A549 (cell line): ENCODE measurements at regions of chr16 and their contacts with region 1.

Region 1: DNA sequence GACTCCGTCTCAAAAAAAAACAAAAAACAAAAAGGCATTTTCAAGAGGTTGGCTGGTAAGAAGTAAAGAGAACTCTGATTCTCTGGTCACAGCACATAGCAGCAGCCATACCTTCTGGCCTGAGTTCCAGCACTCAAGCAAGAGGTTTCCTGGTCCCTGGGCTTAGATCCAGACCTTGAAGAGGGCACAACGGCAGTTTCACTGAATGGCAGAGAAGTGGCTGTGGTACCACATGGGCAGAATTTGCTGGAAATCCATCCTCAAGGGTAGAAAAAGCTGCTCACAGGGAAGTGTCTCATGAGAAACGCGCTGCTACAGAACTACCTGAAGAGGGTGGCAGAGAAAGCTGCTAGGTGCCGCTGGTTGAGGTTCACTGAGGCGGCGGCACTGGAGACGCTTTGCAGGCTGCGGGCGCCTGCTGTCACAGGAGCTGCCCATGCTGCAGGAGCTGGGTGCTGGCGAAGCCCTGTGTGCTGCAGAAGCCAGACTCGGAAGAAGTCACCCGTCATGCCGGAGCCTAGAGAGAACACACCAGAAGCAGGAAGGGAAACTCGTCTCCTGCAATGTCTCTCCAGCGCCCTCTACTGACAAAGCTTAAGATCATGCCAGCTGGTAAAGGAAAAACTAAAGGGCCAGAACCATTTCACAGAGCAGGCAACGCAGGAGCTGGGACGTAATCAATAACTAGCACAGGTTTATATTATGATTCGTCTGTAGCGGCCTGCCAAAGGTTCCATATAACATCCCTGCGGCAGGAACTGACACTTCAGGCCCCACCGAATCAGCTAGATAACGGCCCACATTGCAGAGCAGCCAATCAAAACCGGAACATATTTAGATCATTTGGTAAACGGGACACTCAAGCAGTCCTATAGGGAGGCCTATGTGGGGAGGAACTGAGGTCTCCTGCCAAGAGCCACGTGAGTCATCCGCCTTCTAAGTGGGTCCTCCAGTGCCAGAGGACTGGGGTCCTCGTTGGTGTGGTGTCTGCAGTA is 5.4 kb upstream of the ZNF213 start:
- DNase-seq: peak in 1 of 2 experiments; percentile 87
- ATAC-seq: peak; percentile 70
- H3K4me3 ChIP-seq: peak overlapping the region; percentile 34
- H3K27ac ChIP-seq: peak overlapping the region; percentile 55 to 86
- H3K4me1 ChIP-seq: peaks cover 18% of the 10 kb centered on the region; the same call in 2 of the 3 replicates
- CTCF ChIP-seq: peak; percentile 93
- EP300 ChIP-seq: no peak
- POLR2A ChIP-seq: peak; percentile 11; the same call in 1 of the 2 replicates
- RAD21 ChIP-seq: peak; percentile 59 to 69; a peak in 4 of 5 replicates

Region 2: GRCh38 chr16:3023669-3024478 is 105.6 kb before region 1 on chr16 and contains the starts of genes HCFC1R1 and THOC6:
- CTCF ChIA-PET with region 1: interaction called, 12 read pairs
- POLR2A ChIA-PET with region 1: interaction called, 3 read pairs
- DNase-seq: peak; percentile 83 to 99
- ATAC-seq: peak; percentile 17 to 63
- H3K4me3 ChIP-seq: peak within 1 kb of the TSS; percentile 93
- H3K27ac ChIP-seq: peak within 1 kb of the TSS; percentile 98 to 100
- H3K4me1 ChIP-seq: peaks cover 34% of the 10 kb centered on the region
- CTCF ChIP-seq: no peak
- EP300 ChIP-seq: 0 out of 5 replicates have a peak, but pooled peaks of 1 of the 2 experiments have one; percentile 16
- POLR2A ChIP-seq: peak; percentile 69
- RAD21 ChIP-seq: no peak
- polyA plus RNA-seq, gene HCFC1R1: 46.4 and 60.3 TPM in 2 replicates
- polyA plus RNA-seq, gene THOC6: 31.8 and 32.5 TPM in 2 replicates

Region 3: DNA sequence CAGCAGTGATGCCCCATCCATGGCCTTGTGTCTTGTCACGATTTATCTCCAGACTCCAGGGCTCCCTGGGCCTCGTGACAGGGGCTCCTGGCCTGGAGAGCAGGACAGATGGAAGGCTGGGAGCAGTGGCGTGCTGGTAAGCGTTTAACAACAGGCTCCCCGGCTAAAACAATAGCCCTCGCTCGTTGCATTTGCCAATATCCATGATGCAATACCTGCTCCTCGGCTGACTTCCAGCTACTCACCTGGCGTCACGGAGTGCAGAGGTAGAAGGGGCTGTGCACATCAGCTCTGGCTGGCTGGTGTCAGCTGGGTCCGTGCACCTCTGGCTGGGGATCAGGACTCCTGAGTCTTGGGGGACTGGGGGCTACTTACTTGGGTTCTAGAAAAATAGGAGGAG is 91.2 kb before region 1 on chr16:
- CTCF ChIA-PET with region 1: interaction called, 16 read pairs
- POLR2A ChIA-PET with region 1: no interaction called
- DNase-seq: no peak
- ATAC-seq: peak in 1 of 2 experiments; percentile 1; a peak in 1 of 6 replicates
- H3K4me3 ChIP-seq: no peak overlapping the region
- H3K27ac ChIP-seq: no peak overlapping the region
- H3K4me1 ChIP-seq: 0 out of 3 replicates have a peak, but pooled peaks cover 4% of the 10 kb centered on the region
- CTCF ChIP-seq: no peak
- EP300 ChIP-seq: no peak
- POLR2A ChIP-seq: no peak
- RAD21 ChIP-seq: no peak

Region 4: DNA sequence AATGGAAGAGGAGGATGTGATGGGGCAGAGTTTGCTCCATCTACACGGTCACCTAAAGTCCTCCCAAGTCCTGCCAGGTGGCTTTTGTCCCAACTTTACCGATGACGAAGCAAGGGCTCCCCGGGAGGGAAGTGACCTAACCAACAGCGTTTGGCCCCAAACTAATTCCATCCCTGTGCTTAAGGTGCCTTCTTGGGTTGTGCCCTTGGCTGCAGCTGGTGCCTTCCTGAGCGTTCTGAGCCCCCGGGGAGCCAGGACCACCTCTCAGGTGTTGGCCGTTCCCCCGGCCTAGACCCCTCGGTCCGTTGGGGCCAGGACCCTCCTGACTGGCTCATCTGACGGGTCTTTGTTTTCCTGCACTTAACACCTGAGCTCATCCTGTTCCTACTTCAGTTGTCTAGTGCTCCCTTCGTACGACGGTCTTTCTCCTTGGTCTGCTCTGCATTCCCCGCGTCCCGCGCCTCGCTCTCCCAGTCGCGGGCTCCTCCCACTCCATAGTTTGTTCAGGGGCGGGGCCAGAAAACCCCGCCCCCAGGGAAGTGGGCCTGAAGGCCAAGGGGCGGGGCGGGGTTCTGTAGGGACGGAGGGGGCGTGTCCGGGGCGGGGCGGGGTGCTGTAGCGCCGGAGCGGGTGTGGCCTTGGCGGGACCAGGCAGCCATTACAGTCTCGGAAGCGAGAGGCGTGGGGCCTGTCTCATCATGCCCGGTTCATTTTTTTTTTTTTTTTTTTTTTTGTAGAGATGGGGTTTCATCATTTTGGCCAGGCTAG is 29.5 kb before region 1 on chr16:
- CTCF ChIA-PET with region 1: interaction called, 12 read pairs
- POLR2A ChIA-PET with region 1: interaction called, 3 read pairs
- DNase-seq: peak; percentile 80 to 92
- ATAC-seq: peak; percentile 75 to 87
- H3K4me3 ChIP-seq: peak overlapping the region; percentile 34; the same call in 2 of the 3 replicates
- H3K27ac ChIP-seq: peak overlapping the region; percentile 69 to 78
- H3K4me1 ChIP-seq: peaks cover 15% of the 10 kb centered on the region
- CTCF ChIP-seq: no peak
- EP300 ChIP-seq: no peak
- POLR2A ChIP-seq: no peak
- RAD21 ChIP-seq: no peak

Region 5: GRCh38 chr16:3118204-3118806 is 11.1 kb before region 1 on chr16:
- CTCF ChIA-PET with region 1: interaction called, 46 read pairs
- POLR2A ChIA-PET with region 1: interaction called, 10 read pairs
- DNase-seq: no peak
- ATAC-seq: no peak
- H3K4me3 ChIP-seq: no peak overlapping the region
- H3K27ac ChIP-seq: no peak overlapping the region
- H3K4me1 ChIP-seq: peaks cover 9% of the 10 kb centered on the region
- CTCF ChIP-seq: no peak
- EP300 ChIP-seq: no peak
- POLR2A ChIP-seq: no peak
- RAD21 ChIP-seq: no peak

Region 6: DNA sequence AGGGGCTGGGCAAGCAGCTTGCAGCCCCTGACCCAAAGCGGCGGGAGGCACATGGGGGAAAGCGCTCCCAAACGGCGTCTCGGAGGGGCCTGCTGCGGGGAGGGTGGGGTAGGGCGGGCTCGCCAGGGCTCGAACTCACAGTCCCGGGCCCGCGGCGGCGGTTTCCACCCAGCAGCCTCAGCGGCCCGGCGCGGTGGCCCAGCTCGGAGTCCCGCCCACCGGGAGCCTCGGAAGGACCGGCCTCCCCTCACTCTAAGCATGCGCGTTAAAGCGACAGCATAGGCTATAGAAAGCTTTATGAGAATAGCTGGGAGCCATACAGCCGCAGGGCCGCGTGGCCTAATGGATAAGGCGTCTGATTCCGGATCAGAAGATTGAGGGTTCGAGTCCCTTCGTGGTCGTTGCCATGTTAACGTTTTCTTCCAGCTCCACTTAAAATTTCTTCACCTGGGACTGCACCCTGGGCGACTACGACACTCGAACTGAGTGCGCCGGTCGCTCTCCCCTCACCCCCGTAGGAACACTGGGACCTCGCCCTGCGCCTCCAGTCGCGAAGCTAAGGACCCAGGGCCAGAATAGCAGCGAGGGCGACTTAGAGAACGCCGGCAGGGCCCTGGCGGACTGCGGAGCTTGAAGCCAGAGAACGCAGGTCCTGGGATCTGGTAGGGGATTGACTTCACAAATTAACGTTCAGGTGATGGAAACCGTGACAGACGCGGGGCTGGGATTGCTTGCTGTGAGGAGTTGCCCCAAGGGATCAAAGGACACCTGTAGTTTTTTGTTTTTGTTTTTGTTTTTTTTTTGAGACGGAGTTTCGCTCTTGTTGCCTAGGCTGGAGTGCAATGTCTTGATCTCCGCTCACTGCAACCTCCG is 21.1 kb after region 1 on chr16:
- CTCF ChIA-PET with region 1: interaction called, 158 read pairs
- POLR2A ChIA-PET with region 1: interaction called, 64 read pairs
- DNase-seq: peak; percentile 86 to 97
- ATAC-seq: peak; percentile 69 to 83
- H3K4me3 ChIP-seq: peak overlapping the region; percentile 76
- H3K27ac ChIP-seq: peak overlapping the region; percentile 95 to 97
- H3K4me1 ChIP-seq: peaks cover 7% of the 10 kb centered on the region
- CTCF ChIP-seq: no peak
- EP300 ChIP-seq: no peak
- POLR2A ChIP-seq: no peak
- RAD21 ChIP-seq: no peak

Region 7: GRCh38 chr16:3165111-3165822 is 35.8 kb after region 1 on chr16:
- CTCF ChIA-PET with region 1: interaction called, 18 read pairs
- POLR2A ChIA-PET with region 1: interaction called, 5 read pairs
- DNase-seq: no peak
- ATAC-seq: no peak
- H3K4me3 ChIP-seq: peak overlapping the region; percentile 26; the same call in 1 of the 3 replicates
- H3K27ac ChIP-seq: peak overlapping the region; percentile 76 to 81
- H3K4me1 ChIP-seq: peaks cover 3% of the 10 kb centered on the region; the same call in 2 of the 3 replicates
- CTCF ChIP-seq: no peak
- EP300 ChIP-seq: no peak
- POLR2A ChIP-seq: no peak
- RAD21 ChIP-seq: no peak